B cell (primary cell): ENCODE measurements at regions of chr16 and their contacts with region 1.

Region 1: GRCh38 chr16:9008601-9009260 is 45.0 kb upstream of the USP7 start:
- DNase-seq: peak; percentile 81
- ATAC-seq: peak; percentile 85
- H3K4me3 ChIP-seq: peak overlapping the region in 3 of 5 experiments; percentile 3 to 29 (median 28)
- H3K4me3 Mint-ChIP-seq: peak overlapping the region; percentile 73
- H3K27ac ChIP-seq: no peak overlapping the region
- H3K27ac Mint-ChIP-seq: peak overlapping the region; percentile 65
- H3K4me1 ChIP-seq: peaks cover 8 to 10% of the 10 kb centered on the region in 2 donors
- H3K4me1 Mint-ChIP-seq: peaks cover 8% of the 10 kb centered on the region
- H3K27me3 ChIP-seq: peaks cover 0 to 17% (median 6%) of the 10 kb centered on the region in 4 experiments
- H3K27me3 Mint-ChIP-seq: peaks cover 27% of the 10 kb centered on the region
- CTCF ChIP-seq: peak; percentile 78

Region 2: DNA sequence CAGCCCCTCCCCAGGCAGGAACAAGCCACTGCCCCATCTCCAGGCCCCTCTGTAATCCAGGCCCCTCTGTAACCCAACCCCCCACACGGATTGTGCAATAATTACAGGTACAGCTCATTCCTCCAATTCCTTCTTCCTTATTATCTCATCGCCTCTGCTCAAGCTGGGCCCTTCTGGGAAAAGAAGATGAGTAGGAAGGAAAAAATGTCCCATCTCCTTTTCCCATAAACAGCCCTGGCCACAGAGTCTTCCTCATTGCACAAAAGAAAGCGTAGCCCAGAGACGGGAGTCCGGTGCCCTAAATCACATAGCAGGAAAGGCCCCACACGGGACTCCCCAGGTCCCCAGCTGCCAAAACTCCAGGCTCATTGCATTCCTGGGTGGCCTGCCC is 130.2 kb before region 1 on chr16:
- CTCF ChIA-PET with region 1: interaction called, 13 read pairs
- POLR2A ChIA-PET with region 1: no interaction called
- intact Hi-C with region 1: no loop called
- DNase-seq: no peak
- ATAC-seq: no peak
- H3K4me3 ChIP-seq: no peak overlapping the region
- H3K4me3 Mint-ChIP-seq: no peak overlapping the region
- H3K27ac ChIP-seq: no peak overlapping the region
- H3K27ac Mint-ChIP-seq: no peak overlapping the region
- H3K4me1 ChIP-seq: peaks cover 0 to 5% of the 10 kb centered on the region in 2 donors
- H3K4me1 Mint-ChIP-seq: peaks cover 7% of the 10 kb centered on the region
- H3K27me3 ChIP-seq: peaks cover 0 to 6% (median 3%) of the 10 kb centered on the region in 4 experiments
- H3K27me3 Mint-ChIP-seq: peaks cover 8% of the 10 kb centered on the region
- CTCF ChIP-seq: no peak

Region 3: GRCh38 chr16:8892101-8892575 is 116.6 kb before region 1 on chr16:
- CTCF ChIA-PET with region 1: interaction called, 44 read pairs
- POLR2A ChIA-PET with region 1: interaction called, 9 read pairs
- intact Hi-C with region 1: loop called (anchors 1 kb)
- DNase-seq: peak; percentile 53
- ATAC-seq: no peak
- H3K4me3 ChIP-seq: no peak overlapping the region
- H3K4me3 Mint-ChIP-seq: peak overlapping the region; percentile 68
- H3K27ac ChIP-seq: peak overlapping the region; percentile 41 to 86
- H3K27ac Mint-ChIP-seq: peak overlapping the region; percentile 95
- H3K4me1 ChIP-seq: peaks cover 18 to 40% of the 10 kb centered on the region in 2 donors
- H3K4me1 Mint-ChIP-seq: peaks cover 36% of the 10 kb centered on the region
- H3K27me3 ChIP-seq: no peaks in the 10 kb centered on the region
- H3K27me3 Mint-ChIP-seq: no peaks in the 10 kb centered on the region
- CTCF ChIP-seq: no peak

Region 4: DNA sequence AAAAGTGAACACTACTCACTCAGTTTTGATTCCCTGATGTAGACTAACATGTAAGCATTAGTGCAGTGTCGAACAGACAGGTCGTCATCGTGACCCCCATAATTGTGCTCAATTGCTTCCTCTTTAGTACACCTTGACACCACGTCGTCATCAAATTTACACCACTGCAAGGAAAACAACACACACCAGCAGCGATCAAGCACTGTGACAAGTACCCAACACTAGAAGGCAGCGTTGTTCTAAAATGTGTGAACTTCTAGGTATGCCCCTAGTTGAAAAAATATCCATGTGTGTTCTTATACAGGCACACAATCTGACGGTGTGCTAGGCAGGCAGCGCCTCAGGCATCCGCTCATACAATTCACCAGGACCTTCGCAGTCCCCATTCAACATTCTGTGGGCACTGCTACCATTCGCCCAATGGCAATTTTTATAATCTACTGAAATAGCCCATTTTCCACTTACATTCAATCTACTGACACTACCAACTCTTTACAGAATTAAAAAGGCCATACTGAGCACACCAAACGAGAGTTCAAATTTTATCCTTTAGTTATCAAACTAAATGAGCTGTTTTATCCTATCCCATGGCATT is 103.5 kb before region 1 on chr16:
- CTCF ChIA-PET with region 1: interaction called, 12 read pairs
- POLR2A ChIA-PET with region 1: no interaction called
- intact Hi-C with region 1: loop called (anchors 1 kb)
- DNase-seq: no peak
- ATAC-seq: peak; percentile 47
- H3K4me3 ChIP-seq: no peak overlapping the region
- H3K4me3 Mint-ChIP-seq: no peak overlapping the region
- H3K27ac ChIP-seq: no peak overlapping the region
- H3K27ac Mint-ChIP-seq: peak overlapping the region; percentile 50
- H3K4me1 ChIP-seq: no peaks in the 10 kb centered on the region
- H3K4me1 Mint-ChIP-seq: no peaks in the 10 kb centered on the region
- H3K27me3 ChIP-seq: no peaks in the 10 kb centered on the region
- H3K27me3 Mint-ChIP-seq: no peaks in the 10 kb centered on the region
- CTCF ChIP-seq: peak; percentile 23

Region 5: GRCh38 chr16:8958344-8959167 is 50.2 kb before region 1 on chr16:
- CTCF ChIA-PET with region 1: interaction called, 10 read pairs
- POLR2A ChIA-PET with region 1: interaction called, 4 read pairs
- intact Hi-C with region 1: no loop called
- DNase-seq: no peak
- ATAC-seq: no peak
- H3K4me3 ChIP-seq: peak overlapping the region in 2 of 5 experiments; percentile 3 to 17
- H3K4me3 Mint-ChIP-seq: peak overlapping the region; percentile 90
- H3K27ac ChIP-seq: peak overlapping the region in 1 of 2 donors; percentile 89
- H3K27ac Mint-ChIP-seq: peak overlapping the region; percentile 85
- H3K4me1 ChIP-seq: peaks cover 72 to 80% of the 10 kb centered on the region in 2 donors
- H3K4me1 Mint-ChIP-seq: peaks cover 76% of the 10 kb centered on the region
- H3K27me3 ChIP-seq: no peaks in the 10 kb centered on the region
- H3K27me3 Mint-ChIP-seq: no peaks in the 10 kb centered on the region
- CTCF ChIP-seq: no peak

Region 6: GRCh38 chr16:8989099-8989878 is 19.4 kb before region 1 on chr16:
- CTCF ChIA-PET with region 1: interaction called, 10 read pairs
- POLR2A ChIA-PET with region 1: no interaction called
- intact Hi-C with region 1: no loop called
- DNase-seq: no peak
- ATAC-seq: no peak
- H3K4me3 ChIP-seq: no peak overlapping the region
- H3K4me3 Mint-ChIP-seq: no peak overlapping the region
- H3K27ac ChIP-seq: no peak overlapping the region
- H3K27ac Mint-ChIP-seq: no peak overlapping the region
- H3K4me1 ChIP-seq: no peaks in the 10 kb centered on the region
- H3K4me1 Mint-ChIP-seq: no peaks in the 10 kb centered on the region
- H3K27me3 ChIP-seq: no peaks in the 10 kb centered on the region
- H3K27me3 Mint-ChIP-seq: peaks cover 3% of the 10 kb centered on the region
- CTCF ChIP-seq: no peak

Region 7: DNA sequence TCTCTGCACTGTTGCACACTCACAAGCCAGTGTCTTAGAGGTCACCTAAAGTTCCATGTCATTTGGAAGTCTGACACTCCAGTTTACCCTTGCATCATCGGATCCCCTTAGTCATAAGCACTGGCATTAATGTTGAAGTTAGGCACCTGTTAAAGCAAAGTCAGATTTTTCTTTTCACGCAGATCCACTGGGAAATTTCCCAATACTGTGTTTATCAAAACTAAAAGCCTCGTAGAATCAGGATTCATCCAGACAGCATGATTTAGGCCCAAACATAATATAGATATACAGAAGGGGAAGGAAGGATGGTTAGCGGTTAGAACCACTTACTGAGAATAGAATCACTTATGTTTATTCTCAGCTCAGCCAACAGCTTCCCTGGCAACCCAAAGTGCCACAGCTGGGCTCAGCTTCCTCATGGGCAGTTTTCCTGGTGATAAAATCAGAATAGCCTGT is 52.7 kb after region 1 on chr16:
- CTCF ChIA-PET with region 1: no interaction called
- POLR2A ChIA-PET with region 1: no interaction called
- intact Hi-C with region 1: no loop called
- DNase-seq: peak; percentile 25
- ATAC-seq: no peak
- H3K4me3 ChIP-seq: no peak overlapping the region
- H3K4me3 Mint-ChIP-seq: peak overlapping the region; percentile 31
- H3K27ac ChIP-seq: no peak overlapping the region
- H3K27ac Mint-ChIP-seq: no peak overlapping the region
- H3K4me1 ChIP-seq: peaks cover 19 to 22% of the 10 kb centered on the region in 2 donors
- H3K4me1 Mint-ChIP-seq: peaks cover 18% of the 10 kb centered on the region
- H3K27me3 ChIP-seq: no peaks in the 10 kb centered on the region
- H3K27me3 Mint-ChIP-seq: no peaks in the 10 kb centered on the region
- CTCF ChIP-seq: no peak

Region 8: GRCh38 chr16:9134739-9135138 is 126.0 kb after region 1 on chr16:
- CTCF ChIA-PET with region 1: interaction called, 25 read pairs
- POLR2A ChIA-PET with region 1: no interaction called
- intact Hi-C with region 1: loop called (anchors 1 kb)
- DNase-seq: peak; percentile 74
- ATAC-seq: peak; percentile 63
- H3K4me3 ChIP-seq: no peak overlapping the region
- H3K4me3 Mint-ChIP-seq: no peak overlapping the region
- H3K27ac ChIP-seq: no peak overlapping the region
- H3K27ac Mint-ChIP-seq: peak overlapping the region; percentile 70
- H3K4me1 ChIP-seq: peaks cover 23 to 38% of the 10 kb centered on the region in 2 donors
- H3K4me1 Mint-ChIP-seq: peaks cover 37% of the 10 kb centered on the region
- H3K27me3 ChIP-seq: peaks cover 0 to 3% (median 0%) of the 10 kb centered on the region in 4 experiments
- H3K27me3 Mint-ChIP-seq: peaks cover 3% of the 10 kb centered on the region
- CTCF ChIP-seq: peak; percentile 76